PC-9 (cell line): ENCODE measurements at regions of chr1 and their contacts with region 1.

Region 1: DNA sequence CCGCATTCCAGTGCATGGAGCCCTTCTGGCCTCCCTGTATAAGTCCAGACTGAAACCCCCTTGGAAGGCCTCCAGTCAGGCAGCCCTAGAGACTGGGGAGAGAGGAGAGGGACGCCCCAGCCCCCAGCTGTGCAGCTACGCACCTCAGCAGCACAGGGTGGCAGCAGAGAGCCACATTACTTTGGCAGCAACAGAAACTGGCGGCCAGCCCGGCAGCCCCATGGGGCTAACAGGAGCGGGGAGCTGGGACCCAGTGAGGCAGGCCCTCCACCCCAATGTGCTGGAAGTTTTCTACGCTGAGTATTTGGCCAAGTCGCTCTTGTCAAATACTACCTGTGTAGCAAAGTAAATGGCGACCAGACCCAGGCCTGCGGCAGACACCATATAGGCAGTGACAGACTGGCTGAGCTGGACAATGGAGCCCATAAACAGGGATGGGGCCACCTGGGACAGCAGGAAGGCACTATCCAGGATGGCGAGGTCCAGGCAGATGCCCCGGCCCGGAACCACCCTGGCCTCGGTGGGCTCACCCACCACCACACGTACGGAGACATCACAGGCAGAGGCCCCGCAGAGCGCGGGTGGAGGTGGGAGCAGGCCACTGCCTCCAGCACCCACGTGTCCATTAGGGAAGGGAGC is 21.2 kb downstream of the SLC45A3 start:
- DNase-seq: peak in 1 of 2 experiments; percentile 74
- H3K4me3 ChIP-seq: no peak overlapping the region
- H3K27ac ChIP-seq: no peak overlapping the region
- H3K4me1 ChIP-seq: peaks cover 27% of the 10 kb centered on the region
- H3K27me3 ChIP-seq: no peaks in the 10 kb centered on the region
- CTCF ChIP-seq: peak; percentile 92

Region 2: DNA sequence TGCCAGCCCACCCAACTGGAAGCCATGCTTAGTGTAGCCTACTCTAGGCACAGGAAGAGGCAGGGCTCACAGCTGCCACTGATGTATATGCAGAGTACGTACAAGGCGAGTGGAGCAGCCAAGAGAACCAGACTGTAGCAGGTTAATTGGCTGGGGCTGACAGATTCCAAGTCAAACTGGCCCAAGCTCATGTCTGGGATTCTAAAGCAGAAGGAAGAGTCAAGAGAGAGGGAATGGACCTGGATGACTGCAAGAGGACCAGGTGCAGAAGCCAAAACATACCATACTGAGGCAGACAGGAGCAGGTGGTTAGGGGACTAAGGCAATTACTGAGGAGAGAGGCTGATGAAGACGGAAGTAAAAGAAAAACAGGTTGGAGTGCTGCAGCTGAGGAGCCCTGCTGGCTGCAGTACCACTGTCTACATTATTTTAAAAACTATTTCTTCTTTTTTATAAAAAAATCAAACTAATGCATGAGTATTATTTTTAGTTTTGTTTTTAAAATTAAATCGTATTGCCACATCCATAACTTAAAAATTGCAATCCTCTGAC is 922.1 kb before region 1 on chr1:
- CTCF ChIA-PET with region 1: no interaction called
- POLR2A ChIA-PET with region 1: no interaction called
- intact Hi-C with region 1: no loop called
- DNase-seq: no peak
- H3K4me3 ChIP-seq: no peak overlapping the region
- H3K27ac ChIP-seq: no peak overlapping the region
- H3K4me1 ChIP-seq: no peaks in the 10 kb centered on the region
- H3K27me3 ChIP-seq: peaks cover 17% of the 10 kb centered on the region; the same call in 1 of the 2 replicates
- CTCF ChIP-seq: no peak

Region 3: GRCh38 chr1:205396967-205397616 is 262.0 kb before region 1 on chr1:
- CTCF ChIA-PET with region 1: no interaction called
- POLR2A ChIA-PET with region 1: no interaction called
- intact Hi-C with region 1: loop called (anchors 5 kb)
- DNase-seq: peak; percentile 30 to 51
- H3K4me3 ChIP-seq: no peak overlapping the region
- H3K27ac ChIP-seq: no peak overlapping the region
- H3K4me1 ChIP-seq: no peaks in the 10 kb centered on the region
- H3K27me3 ChIP-seq: no peaks in the 10 kb centered on the region
- CTCF ChIP-seq: peak; percentile 89

Region 4: GRCh38 chr1:205578780-205579606 is 80.1 kb before region 1 on chr1:
- CTCF ChIA-PET with region 1: interaction called, 20 read pairs
- POLR2A ChIA-PET with region 1: no interaction called
- intact Hi-C with region 1: no loop called
- DNase-seq: peak; percentile 85 to 99
- H3K4me3 ChIP-seq: no peak overlapping the region; the same call in 1 of the 2 replicates
- H3K27ac ChIP-seq: peak overlapping the region; percentile 35
- H3K4me1 ChIP-seq: peaks cover 36% of the 10 kb centered on the region
- H3K27me3 ChIP-seq: no peaks in the 10 kb centered on the region
- CTCF ChIP-seq: no peak

Region 5: GRCh38 chr1:205591522-205592351 is 67.3 kb before region 1 on chr1:
- CTCF ChIA-PET with region 1: interaction called, 44 read pairs
- POLR2A ChIA-PET with region 1: no interaction called
- intact Hi-C with region 1: loop called (anchors 1 kb)
- DNase-seq: peak; percentile 65 to 86
- H3K4me3 ChIP-seq: peak overlapping the region; percentile 30; the same call in 1 of the 2 replicates
- H3K27ac ChIP-seq: no peak overlapping the region
- H3K4me1 ChIP-seq: peaks cover 11% of the 10 kb centered on the region
- H3K27me3 ChIP-seq: no peaks in the 10 kb centered on the region
- CTCF ChIP-seq: peak; percentile 95

Region 6: GRCh38 chr1:205711104-205712020 is 52.3 kb after region 1 on chr1:
- CTCF ChIA-PET with region 1: interaction called, 96 read pairs
- POLR2A ChIA-PET with region 1: interaction called, 4 read pairs
- intact Hi-C with region 1: loop called (anchors 1 kb)
- DNase-seq: peak; percentile 41 to 65
- H3K4me3 ChIP-seq: no peak overlapping the region
- H3K27ac ChIP-seq: peak overlapping the region; percentile 52
- H3K4me1 ChIP-seq: no peaks in the 10 kb centered on the region
- H3K27me3 ChIP-seq: no peaks in the 10 kb centered on the region
- CTCF ChIP-seq: peak; percentile 95

Region 7: DNA sequence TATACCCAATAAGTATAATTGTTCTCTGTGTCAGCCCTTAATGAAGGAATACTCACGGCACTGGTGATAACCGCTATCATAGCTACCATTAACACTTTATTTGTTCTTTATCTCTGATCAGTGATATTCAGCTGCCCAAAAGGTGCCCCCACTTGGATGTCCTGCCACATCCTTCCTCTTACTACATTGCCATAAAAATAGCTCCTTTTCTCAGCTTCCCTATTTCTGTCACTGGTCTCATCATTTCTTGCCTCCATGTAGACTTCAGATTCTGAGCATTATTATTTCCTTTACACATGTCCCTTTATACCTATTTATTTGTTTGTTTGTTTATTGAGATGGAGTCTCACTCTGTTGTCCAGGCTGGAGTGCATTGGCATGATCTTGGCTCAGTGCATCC is 118.9 kb after region 1 on chr1:
- CTCF ChIA-PET with region 1: no interaction called
- POLR2A ChIA-PET with region 1: no interaction called
- intact Hi-C with region 1: no loop called
- DNase-seq: no peak
- H3K4me3 ChIP-seq: no peak overlapping the region
- H3K27ac ChIP-seq: no peak overlapping the region
- H3K4me1 ChIP-seq: peaks cover 8% of the 10 kb centered on the region
- H3K27me3 ChIP-seq: no peaks in the 10 kb centered on the region
- CTCF ChIP-seq: no peak

Region 8: DNA sequence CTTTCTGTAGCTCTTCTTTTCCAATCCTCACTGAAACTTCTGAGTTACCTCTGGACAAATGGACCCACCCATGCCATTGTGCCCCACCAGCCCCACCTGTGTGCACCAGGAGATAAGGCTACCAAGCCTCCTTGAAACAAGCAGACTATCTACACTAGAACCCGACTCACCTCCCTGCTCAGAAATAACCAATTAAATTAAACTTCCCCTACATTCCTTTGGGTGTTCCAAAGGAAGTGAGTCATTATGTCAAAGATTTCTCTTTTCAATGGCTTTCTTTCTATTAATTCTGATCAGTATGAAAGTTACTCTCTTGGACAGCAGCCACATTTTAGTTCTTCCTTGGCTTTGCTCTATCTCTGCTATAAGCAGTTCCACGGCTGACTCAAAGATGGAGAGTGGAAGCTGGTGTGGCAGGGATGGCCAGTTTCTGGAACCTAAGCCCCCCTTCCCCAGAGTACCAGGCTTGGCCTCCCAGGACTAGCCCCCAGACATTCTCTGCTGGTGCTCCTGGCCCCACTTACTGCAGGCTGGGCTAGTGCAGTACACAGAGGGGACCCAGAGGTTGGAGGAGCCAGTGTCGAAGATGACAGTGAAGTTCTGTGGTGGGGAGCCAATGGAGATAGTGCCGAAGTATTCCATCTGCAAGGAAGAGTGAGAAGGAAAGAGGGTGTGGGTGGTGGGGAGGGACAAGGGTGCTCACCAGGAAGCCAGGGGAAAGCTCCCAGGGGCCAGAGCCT is 362.7 kb after region 1 on chr1:
- CTCF ChIA-PET with region 1: no interaction called
- POLR2A ChIA-PET with region 1: no interaction called
- intact Hi-C with region 1: no loop called
- DNase-seq: peak in 1 of 2 experiments; percentile 80
- H3K4me3 ChIP-seq: peak overlapping the region; percentile 36; the same call in 1 of the 2 replicates
- H3K27ac ChIP-seq: peak overlapping the region; percentile 88
- H3K4me1 ChIP-seq: peaks cover 28% of the 10 kb centered on the region
- H3K27me3 ChIP-seq: no peaks in the 10 kb centered on the region
- CTCF ChIP-seq: no peak